HepG2 (cell line): ENCODE measurements at regions of chr12 and their contacts with region 1.

Region 1: DNA sequence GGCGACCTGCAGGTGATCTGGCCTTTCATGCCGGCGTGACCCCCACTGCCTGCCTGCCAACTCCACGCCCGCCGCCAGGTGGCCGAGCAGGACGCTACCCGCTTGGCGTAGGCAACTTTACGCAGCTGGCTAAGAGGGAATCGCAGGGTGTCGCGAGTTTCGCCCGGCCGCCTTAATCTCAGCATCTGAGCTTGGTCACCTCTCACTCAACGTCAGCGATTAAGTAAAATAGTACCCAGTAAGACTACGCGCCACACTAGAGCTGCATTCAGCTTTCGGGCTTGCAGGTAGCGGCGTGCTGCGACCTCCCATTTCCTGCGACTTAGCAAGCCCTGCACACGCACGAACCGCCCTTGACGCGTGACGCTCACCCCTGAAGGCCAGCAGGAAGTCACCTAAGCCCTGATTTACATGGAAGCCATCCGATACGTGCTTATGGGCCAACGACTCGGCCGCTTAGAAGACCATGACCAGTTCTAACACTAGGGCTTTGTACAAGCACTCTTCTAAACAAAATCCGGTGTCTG is 33.2 kb downstream of the WBP11 start:
- DNase-seq: peak; percentile 83
- ATAC-seq: peak; percentile 75
- H3K4me3 ChIP-seq: peak overlapping the region; percentile 70 to 92 (median 79)
- H3K27ac ChIP-seq: peak overlapping the region; percentile 95
- H3K4me1 ChIP-seq: peaks cover 29% of the 10 kb centered on the region
- H3K27me3 ChIP-seq: no peaks in the 10 kb centered on the region; a peak in 1 of 5 replicates
- CTCF ChIP-seq: peak; percentile 87
- EP300 ChIP-seq: no peak
- POLR2A ChIP-seq: peak; percentile 77 to 78
- RAD21 ChIP-seq: peak; percentile 60

Region 2: DNA sequence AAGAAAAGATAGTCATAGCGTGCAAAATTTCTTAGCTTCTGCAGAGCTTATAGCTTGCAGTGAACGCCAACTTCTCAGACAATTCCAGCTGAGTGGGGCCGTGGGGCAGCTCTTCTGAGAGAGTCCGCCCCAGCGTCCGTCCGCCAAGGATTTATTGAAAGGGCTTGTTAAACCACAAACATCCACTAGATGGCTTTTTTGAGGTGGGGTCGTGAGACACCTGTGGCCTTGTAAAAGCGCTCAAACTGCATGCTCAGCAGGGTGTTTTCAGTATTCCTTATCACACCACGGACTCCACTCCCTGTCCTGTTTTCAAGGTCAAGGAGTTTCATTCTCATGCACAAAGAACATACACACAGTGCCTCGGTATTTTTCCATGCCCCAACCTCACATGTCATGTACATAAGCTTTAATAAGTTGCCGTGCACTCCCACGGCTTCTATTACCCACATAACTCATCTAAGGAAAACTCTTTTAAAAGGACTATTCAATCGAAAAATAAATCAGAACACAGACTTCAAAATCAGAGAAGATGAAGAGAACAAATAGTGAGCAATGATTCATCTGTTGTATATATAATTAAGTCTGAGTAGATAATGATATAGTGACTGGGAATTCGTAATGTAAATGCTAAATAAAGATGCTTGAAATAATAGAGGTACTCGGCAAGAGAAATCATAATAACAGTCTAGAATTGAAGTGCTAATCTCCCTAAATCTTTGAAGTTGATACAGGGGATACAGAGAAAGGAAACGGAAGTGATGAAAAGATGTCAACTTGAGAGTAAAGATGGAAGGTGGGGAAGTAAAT is 13.5 kb before region 1 on chr12:
- CTCF ChIA-PET with region 1: interaction called, 7 read pairs
- POLR2A ChIA-PET with region 1: interaction called, 26 read pairs
- in situ Hi-C with region 1: no loop called
- intact Hi-C with region 1: no loop called
- DNase-seq: peak; percentile 45
- ATAC-seq: peak; percentile 85
- H3K4me3 ChIP-seq: peak overlapping the region in 2 of 3 experiments; percentile 11 to 33; a peak in 2 of 6 replicates
- H3K27ac ChIP-seq: no peak overlapping the region
- H3K4me1 ChIP-seq: peaks cover 19% of the 10 kb centered on the region
- H3K27me3 ChIP-seq: no peaks in the 10 kb centered on the region
- CTCF ChIP-seq: peak; percentile 72
- EP300 ChIP-seq: no peak
- POLR2A ChIP-seq: no peak
- RAD21 ChIP-seq: peak; percentile 20; the same call in 1 of the 2 replicates

Region 3: DNA sequence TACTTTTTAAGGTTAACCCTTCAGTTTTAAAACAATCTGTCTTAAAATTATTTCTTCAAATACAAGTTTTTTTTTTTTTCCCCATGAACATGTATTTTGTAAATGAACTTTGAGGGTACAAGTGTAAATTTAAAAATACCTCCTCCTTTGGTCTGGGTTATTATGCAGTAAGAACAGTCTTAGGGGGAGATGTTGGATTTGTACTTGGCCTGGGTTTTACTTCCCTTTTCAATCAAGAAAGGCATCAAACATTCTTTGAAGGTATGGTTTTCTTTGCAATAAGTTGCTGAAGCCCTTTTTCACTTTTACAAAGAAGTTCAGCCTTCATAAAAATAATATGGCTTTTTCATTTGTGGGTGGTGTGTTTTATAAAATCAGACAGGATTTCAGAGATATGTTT is 12.7 kb after region 1 on chr12:
- CTCF ChIA-PET with region 1: no interaction called
- POLR2A ChIA-PET with region 1: interaction called, 26 read pairs
- in situ Hi-C with region 1: no loop called
- intact Hi-C with region 1: no loop called
- DNase-seq: no peak
- ATAC-seq: no peak
- H3K4me3 ChIP-seq: no peak overlapping the region
- H3K27ac ChIP-seq: no peak overlapping the region
- H3K4me1 ChIP-seq: peaks cover 18% of the 10 kb centered on the region
- H3K27me3 ChIP-seq: no peaks in the 10 kb centered on the region; a peak in 1 of 5 replicates
- CTCF ChIP-seq: no peak
- EP300 ChIP-seq: no peak
- POLR2A ChIP-seq: no peak
- RAD21 ChIP-seq: no peak

Region 4: DNA sequence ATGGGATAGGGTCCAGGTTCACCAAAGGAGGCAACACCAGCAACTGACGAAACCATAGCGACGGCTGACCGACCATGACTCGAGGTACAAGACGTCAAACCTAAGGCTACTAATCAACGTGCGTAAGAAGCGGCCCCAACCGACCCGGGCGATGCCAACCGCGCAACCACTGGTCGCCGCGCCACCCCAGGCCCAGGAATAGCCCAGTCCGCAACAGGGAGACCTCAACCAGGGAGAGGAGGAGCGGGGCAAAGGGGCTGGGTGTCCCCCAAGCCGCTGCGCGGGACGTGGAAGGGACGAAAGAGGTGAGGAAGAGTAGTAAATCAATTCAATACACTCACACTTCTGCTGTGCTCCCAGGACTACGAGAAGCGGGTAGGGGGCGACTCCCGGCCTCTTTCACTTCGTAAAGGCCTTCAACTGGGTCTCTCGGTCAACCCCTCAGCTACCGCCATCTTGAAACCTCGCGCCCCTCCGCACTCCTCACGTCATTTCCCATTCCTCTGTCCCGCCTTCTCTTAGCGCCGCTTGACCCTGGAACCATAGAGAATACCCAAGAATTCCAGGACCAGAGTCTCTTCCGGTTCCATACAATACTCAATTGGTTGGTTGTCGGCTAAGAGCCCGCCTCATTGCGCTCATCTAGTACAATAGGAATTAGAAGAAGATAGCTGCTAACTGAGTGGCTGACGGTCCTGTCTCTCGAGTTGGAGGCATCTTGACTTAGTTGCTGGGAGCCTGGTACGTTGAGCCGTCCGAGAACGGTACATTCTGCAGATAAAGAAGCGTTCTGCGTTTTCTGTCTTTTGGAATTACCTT is 33.2 kb after region 1 on chr12 and contains the starts of genes C12orf60 and WBP11:
- CTCF ChIA-PET with region 1: no interaction called
- POLR2A ChIA-PET with region 1: interaction called, 71 read pairs
- in situ Hi-C with region 1: no loop called
- intact Hi-C with region 1: loop called (anchors 1 kb)
- DNase-seq: peak; percentile 99
- ATAC-seq: peak; percentile 99
- H3K4me3 ChIP-seq: peak within 1 kb of the TSS; percentile 92 to 97 (median 96)
- H3K27ac ChIP-seq: peak within 1 kb of the TSS; percentile 83
- H3K4me1 ChIP-seq: peaks cover 33% of the 10 kb centered on the region
- H3K27me3 ChIP-seq: no peaks in the 10 kb centered on the region; a peak in 1 of 5 replicates
- CTCF ChIP-seq: peak; percentile 5; the same call in 1 of the 2 replicates
- EP300 ChIP-seq: no peak
- POLR2A ChIP-seq: peak; percentile 80 to 88
- RAD21 ChIP-seq: no peak
- total RNA-seq, gene C12orf60: 1.4 and 2.3 TPM in 2 replicates
- total RNA-seq, gene WBP11: 31.0 and 44.4 TPM in 2 replicates

Region 5: DNA sequence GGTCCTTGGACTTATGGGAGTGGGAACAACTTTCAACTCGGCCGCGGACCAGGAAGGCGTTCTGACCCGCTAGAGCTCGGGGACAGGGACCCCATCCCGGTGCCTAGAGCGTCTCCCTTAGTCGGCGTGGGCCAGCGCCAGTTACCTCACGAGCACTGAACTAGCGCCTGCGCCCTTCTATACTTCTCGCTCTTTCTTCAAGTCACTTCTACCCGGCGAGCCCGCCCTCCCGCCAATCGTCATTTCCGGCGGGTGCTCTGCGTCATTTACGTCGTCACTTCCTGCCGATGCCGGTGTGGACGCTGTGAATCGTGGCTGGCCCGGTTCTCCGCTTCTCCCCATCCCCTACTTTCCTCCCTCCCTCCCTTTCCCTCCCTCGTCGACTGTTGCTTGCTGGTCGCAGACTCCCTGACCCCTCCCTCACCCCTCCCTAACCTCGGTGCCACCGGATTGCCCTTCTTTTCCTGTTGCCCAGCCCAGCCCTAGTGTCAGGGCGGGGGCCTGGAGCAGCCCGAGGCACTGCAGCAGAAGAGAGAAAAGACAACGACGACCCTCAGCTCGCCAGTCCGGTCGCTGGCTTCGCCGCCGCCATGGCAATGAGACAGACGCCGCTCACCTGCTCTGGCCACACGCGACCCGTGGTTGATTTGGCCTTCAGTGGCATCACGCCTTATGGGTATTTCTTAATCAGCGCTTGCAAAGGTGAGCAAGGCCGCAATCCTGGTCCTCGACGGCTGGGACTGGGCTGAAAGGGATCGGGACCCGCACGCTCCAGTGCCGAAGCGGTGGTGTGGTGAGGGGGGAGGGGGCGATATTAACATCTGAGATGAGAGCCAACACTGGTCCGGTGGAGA is 1112.3 kb after region 1 on chr12 and contains the start of gene STRAP:
- CTCF ChIA-PET with region 1: no interaction called
- POLR2A ChIA-PET with region 1: no interaction called
- in situ Hi-C with region 1: no loop called
- intact Hi-C with region 1: loop called (anchors 10 kb)
- DNase-seq: peak; percentile 93
- ATAC-seq: peak; percentile 94
- H3K4me3 ChIP-seq: peak within 1 kb of the TSS; percentile 77 to 99 (median 96)
- H3K27ac ChIP-seq: peak within 1 kb of the TSS; percentile 94
- H3K4me1 ChIP-seq: peaks cover 47% of the 10 kb centered on the region
- H3K27me3 ChIP-seq: peaks cover 0 to 6% of the 10 kb centered on the region in 2 experiments; a peak in 1 of 5 replicates
- CTCF ChIP-seq: peak; percentile 23; the same call in 1 of the 2 replicates
- EP300 ChIP-seq: peak in 1 of 2 experiments; percentile 16; a peak in 1 of 4 replicates
- POLR2A ChIP-seq: peak; percentile 96 to 98
- RAD21 ChIP-seq: peak; percentile 32; the same call in 1 of the 2 replicates
- total RNA-seq, gene STRAP: 118 and 209 TPM in 2 replicates